Naive thymus-derived CD4-positive, alpha-beta T cell (primary cell): ENCODE measurements at regions of chr10 and their contacts with region 1.

Region 1: GRCh38 chr10:26437637-26438461 is at the start of gene APBB1IP:
- DNase-seq: peak; percentile 24 to 60 (median 47)
- ATAC-seq: peak; percentile 73
- H3K4me3 ChIP-seq: peak within 1 kb of the TSS; percentile 95
- H3K4me3 Mint-ChIP-seq: peak within 1 kb of the TSS; percentile 80 to 98 (median 95)
- H3K27ac ChIP-seq: peak within 1 kb of the TSS; percentile 91
- H3K27ac Mint-ChIP-seq: peak within 1 kb of the TSS; percentile 91 to 98 (median 97)
- H3K4me1 ChIP-seq: peaks cover 16 to 35% of the 10 kb centered on the region in 2 donors
- H3K4me1 Mint-ChIP-seq: peaks cover 40 to 62% (median 57%) of the 10 kb centered on the region in 7 donors
- H3K27me3 ChIP-seq: no peaks in the 10 kb centered on the region
- H3K27me3 Mint-ChIP-seq: no peaks in the 10 kb centered on the region
- total RNA-seq, gene APBB1IP: 64.7 to 101 (median 88.0) TPM

Region 2: DNA sequence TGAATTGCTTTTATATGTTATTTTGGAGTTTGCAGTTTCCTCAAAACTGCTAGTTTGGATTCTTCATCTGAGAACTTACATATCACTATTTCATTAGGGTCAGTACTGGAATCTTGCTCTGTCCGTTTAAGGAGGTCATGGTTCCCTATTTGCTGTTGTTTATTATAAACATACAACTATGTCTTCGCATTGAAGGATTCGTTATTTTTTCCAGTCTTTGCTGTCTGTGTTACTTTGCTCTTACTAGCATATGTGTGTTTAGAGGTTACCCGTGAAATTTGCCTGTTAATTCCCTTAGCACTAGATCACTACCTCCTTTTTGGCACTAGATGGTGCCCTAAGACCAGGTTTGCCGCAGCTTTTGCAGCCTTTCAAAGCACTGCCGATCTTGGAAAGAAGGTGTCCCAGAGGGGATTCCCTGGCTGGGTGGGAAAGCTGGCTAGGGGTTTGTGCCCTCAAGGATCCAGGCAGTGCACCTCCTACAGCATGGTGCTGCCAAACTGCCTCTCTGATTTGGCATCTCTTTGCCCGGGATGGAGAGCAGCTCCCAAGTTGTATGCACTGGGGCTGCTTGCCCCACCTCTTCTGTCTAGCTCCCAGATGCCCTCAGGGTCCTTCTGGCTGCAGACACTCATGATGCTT is 102.8 kb before region 1 on chr10:
- CTCF ChIA-PET with region 1: interaction called, 4 read pairs
- POLR2A ChIA-PET with region 1: no interaction called
- intact Hi-C with region 1: loop called (anchors 1 kb)
- DNase-seq: peak; percentile 46 to 78 (median 70)
- ATAC-seq: peak; percentile 93
- H3K4me3 ChIP-seq: peak overlapping the region; percentile 43
- H3K4me3 Mint-ChIP-seq: peak overlapping the region; percentile 53 to 92 (median 86)
- H3K27ac ChIP-seq: no peak overlapping the region
- H3K27ac Mint-ChIP-seq: peak overlapping the region in 7 of 9 donors; percentile 2 to 83 (median 60)
- H3K4me1 ChIP-seq: no peaks in the 10 kb centered on the region
- H3K4me1 Mint-ChIP-seq: peaks cover 0 to 12% (median 2%) of the 10 kb centered on the region in 7 donors
- H3K27me3 ChIP-seq: no peaks in the 10 kb centered on the region
- H3K27me3 Mint-ChIP-seq: peaks cover 0 to 2% (median 0%) of the 10 kb centered on the region in 5 donors

Region 3: DNA sequence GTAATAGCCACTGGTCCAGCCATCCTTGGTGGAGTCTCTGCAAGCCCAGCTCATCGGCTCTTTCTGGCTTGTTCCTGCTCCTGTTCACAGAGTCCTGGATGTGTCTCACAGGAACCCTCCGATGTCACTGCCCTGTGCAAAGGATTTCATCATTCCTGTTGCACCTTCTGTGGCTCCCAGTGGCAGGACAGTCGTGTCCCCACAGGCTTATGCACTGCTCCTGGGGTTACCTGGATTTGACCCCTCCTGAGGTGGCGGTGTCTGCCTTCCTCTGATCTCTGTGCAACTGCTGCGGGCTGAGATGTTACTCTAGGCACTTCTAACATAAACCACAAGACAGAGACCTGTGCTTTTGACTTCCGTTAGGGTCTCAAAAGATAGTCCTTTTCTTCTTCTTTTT is 30.9 kb after region 1 on chr10:
- CTCF ChIA-PET with region 1: no interaction called
- POLR2A ChIA-PET with region 1: interaction called, 14 read pairs
- intact Hi-C with region 1: loop called in 1 of 2 experiments (anchors 1 kb)
- DNase-seq: peak in 8 of 9 donors; percentile 20 to 82 (median 76)
- ATAC-seq: peak; percentile 94
- H3K4me3 ChIP-seq: peak overlapping the region; percentile 1
- H3K4me3 Mint-ChIP-seq: peak overlapping the region; percentile 66 to 93 (median 84)
- H3K27ac ChIP-seq: peak overlapping the region; percentile 33
- H3K27ac Mint-ChIP-seq: peak overlapping the region; percentile 83 to 96 (median 91)
- H3K4me1 ChIP-seq: peaks cover 64 to 76% of the 10 kb centered on the region in 2 donors
- H3K4me1 Mint-ChIP-seq: peaks cover 61 to 100% (median 92%) of the 10 kb centered on the region in 7 donors
- H3K27me3 ChIP-seq: no peaks in the 10 kb centered on the region
- H3K27me3 Mint-ChIP-seq: no peaks in the 10 kb centered on the region

Region 4: GRCh38 chr10:26486991-26487850 is 49.4 kb after region 1 on chr10:
- CTCF ChIA-PET with region 1: interaction called, 7 read pairs
- POLR2A ChIA-PET with region 1: interaction called, 16 read pairs
- intact Hi-C with region 1: loop called (anchors 1 kb)
- DNase-seq: peak in 8 of 9 donors; percentile 50 to 86 (median 66)
- ATAC-seq: peak; percentile 85
- H3K4me3 ChIP-seq: peak overlapping the region; percentile 43
- H3K4me3 Mint-ChIP-seq: peak overlapping the region; percentile 8 to 83 (median 74)
- H3K27ac ChIP-seq: peak overlapping the region; percentile 84
- H3K27ac Mint-ChIP-seq: peak overlapping the region; percentile 90 to 97 (median 94)
- H3K4me1 ChIP-seq: peaks cover 56 to 64% of the 10 kb centered on the region in 2 donors
- H3K4me1 Mint-ChIP-seq: peaks cover 57 to 82% (median 74%) of the 10 kb centered on the region in 7 donors
- H3K27me3 ChIP-seq: no peaks in the 10 kb centered on the region
- H3K27me3 Mint-ChIP-seq: no peaks in the 10 kb centered on the region

Region 5: DNA sequence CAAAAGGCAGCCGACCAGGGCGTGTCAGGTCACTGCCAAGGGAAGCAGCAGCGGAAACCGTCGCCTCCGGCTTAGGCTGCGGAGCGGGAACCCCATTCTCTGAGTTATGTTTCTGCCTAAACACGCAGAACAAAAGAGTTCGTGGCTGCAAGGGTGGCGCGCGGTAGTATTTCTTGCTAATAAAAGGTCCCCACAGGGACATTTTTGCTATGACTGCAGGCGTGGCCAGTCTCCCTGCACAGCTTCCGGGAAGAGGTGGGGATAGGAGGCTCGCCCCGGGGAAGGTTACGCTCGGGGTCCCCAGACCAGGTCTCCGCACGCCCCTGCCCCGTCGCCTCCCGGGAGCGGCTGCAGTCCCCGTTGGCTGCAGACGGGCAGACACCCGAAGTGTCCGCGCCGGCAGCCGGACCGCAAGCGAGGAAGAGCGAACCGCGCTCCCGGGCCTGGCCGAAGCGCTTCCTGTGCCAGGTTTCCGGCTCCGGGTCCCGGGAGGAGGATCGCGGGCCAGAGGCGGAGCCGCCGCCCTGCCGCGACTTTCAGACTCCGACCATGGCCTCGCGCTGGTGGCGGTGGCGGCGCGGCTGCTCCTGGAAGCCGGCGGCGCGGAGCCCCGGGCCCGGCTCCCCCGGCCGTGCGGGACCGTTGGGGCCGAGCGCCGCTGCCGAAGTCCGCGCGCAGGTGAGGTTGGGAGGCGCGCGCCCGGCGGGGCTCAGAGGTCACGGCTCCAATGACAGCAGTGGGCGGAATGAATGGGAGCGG is 259.5 kb after region 1 on chr10 and contains the start of gene PDSS1:
- CTCF ChIA-PET with region 1: interaction called, 4 read pairs
- POLR2A ChIA-PET with region 1: no interaction called
- intact Hi-C with region 1: loop called (anchors 2 to 5 kb)
- DNase-seq: peak; percentile 34 to 77 (median 60)
- ATAC-seq: peak; percentile 77
- H3K4me3 ChIP-seq: peak within 1 kb of the TSS; percentile 77
- H3K4me3 Mint-ChIP-seq: peak within 1 kb of the TSS; percentile 92 to 100 (median 98)
- H3K27ac ChIP-seq: peak within 1 kb of the TSS; percentile 85
- H3K27ac Mint-ChIP-seq: peak within 1 kb of the TSS; percentile 94 to 99 (median 97)
- H3K4me1 ChIP-seq: peaks cover 7 to 17% of the 10 kb centered on the region in 2 donors
- H3K4me1 Mint-ChIP-seq: peaks cover 28 to 47% (median 34%) of the 10 kb centered on the region in 7 donors
- H3K27me3 ChIP-seq: no peaks in the 10 kb centered on the region
- H3K27me3 Mint-ChIP-seq: no peaks in the 10 kb centered on the region
- total RNA-seq, gene PDSS1: 3.8 to 15.2 (median 4.7) TPM